ENCODE measurements at regions of chr13 and their contacts with region 1.

Region 1: GRCh38 chr13:99980201-99980823 is 1.3 kb upstream of the ZIC2 start:
- DNase-seq: peak; percentile 80
- ATAC-seq: peak; percentile 82
- H3K4me3 Mint-ChIP-seq: peak overlapping the region; percentile 30
- H3K27ac Mint-ChIP-seq: no peak overlapping the region
- H3K4me1 Mint-ChIP-seq: peaks cover 25% of the 10 kb centered on the region
- H3K27me3 Mint-ChIP-seq: peaks cover 60% of the 10 kb centered on the region

Region 2: DNA sequence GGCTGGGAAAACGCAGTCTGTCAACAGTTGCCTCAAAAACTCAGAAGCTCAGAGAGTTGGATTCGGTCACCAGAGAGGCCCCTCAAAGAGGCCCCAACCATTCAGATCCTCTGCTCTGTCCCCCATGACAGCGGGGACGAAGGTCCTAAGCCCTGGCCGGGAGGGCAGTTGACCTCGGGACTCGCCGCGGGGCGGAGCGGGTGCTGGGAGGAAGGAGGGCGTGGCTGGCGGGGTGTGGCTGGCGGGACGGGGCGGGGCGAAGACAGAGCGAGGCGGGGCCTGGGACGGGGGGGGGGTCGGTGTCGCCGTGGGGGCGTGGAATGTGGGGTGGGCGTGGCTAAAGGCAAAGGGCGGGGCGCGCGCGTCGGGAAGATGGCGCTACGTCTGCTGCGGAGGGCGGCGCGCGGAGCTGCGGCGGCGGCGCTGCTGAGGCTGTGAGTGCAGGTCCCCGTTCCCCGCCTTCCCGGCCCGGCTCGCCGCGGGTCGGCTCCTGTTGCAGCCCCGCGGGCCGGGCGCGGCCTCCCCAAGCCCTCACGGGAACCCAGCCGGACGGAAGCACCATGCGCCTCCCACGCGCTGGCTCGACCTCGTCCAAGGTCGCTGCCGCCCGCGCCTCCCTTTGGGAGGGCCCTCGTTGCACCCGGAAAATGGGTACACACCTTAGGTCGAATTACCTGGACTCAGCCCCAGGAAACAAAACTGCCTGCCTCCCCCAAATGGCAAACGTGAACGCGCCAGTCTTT is 373.8 kb before region 1 on chr13:
- CTCF ChIA-PET with region 1: no interaction called
- POLR2A ChIA-PET with region 1: no interaction called
- intact Hi-C with region 1: loop called in 1 of 2 experiments (anchors 1 kb)
- DNase-seq: peak; percentile 95
- ATAC-seq: peak; percentile 89
- H3K4me3 Mint-ChIP-seq: peak within 1 kb of the TSS; percentile 83
- H3K27ac Mint-ChIP-seq: peak within 1 kb of the TSS; percentile 81
- H3K4me1 Mint-ChIP-seq: peaks cover 42% of the 10 kb centered on the region
- H3K27me3 Mint-ChIP-seq: no peaks in the 10 kb centered on the region

Region 3: DNA sequence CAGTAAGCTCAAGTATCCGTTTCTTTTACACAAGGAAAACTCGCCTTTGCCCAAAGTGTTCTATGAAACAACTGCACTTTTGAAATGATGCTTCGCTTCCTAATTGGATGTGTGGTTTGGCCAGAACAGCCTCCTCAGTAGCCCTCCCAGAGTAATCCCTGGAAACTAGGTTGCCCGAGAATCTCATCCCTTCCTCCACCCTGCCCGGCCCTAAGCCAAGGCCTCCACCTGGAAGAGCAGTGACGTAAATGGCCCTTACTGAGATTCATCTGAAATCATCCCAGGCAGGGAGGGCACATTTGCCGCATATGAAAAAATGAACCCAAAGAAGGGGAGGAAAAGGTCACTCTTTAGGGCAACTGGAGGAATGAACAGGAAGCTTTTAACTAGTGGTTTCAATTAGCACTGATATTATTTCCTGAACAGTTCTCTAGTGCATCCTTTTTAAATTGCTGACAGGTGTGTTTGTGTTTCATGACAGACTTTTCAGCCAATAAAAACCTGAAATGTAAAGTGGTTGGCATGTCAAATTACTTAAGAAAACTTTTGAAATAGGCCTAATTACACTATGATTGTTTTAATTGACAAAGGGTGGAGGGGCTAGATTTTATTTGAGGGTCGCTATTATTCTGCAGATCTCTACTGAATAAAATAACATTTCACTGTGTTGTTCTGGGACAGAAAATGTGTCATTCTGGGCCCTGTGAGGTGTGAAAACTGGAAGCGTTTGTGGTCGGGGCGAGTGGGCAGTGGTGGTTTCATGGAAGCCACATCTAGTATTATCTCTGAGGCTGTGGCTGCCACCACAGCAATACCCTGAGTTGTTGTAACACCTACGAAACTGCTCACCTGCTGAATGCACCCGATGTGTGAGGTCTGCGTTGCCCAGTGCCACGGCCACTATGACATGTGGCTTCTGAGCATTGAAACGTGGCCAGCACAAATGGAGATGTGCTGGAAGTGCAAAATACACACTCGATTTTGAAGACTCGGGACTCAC is 120.8 kb before region 1 on chr13:
- CTCF ChIA-PET with region 1: no interaction called
- POLR2A ChIA-PET with region 1: no interaction called
- intact Hi-C with region 1: no loop called
- DNase-seq: peak; percentile 82
- ATAC-seq: peak; percentile 88
- H3K4me3 Mint-ChIP-seq: no peak overlapping the region
- H3K27ac Mint-ChIP-seq: no peak overlapping the region
- H3K4me1 Mint-ChIP-seq: peaks cover 9% of the 10 kb centered on the region
- H3K27me3 Mint-ChIP-seq: peaks cover 17% of the 10 kb centered on the region

Region 4: DNA sequence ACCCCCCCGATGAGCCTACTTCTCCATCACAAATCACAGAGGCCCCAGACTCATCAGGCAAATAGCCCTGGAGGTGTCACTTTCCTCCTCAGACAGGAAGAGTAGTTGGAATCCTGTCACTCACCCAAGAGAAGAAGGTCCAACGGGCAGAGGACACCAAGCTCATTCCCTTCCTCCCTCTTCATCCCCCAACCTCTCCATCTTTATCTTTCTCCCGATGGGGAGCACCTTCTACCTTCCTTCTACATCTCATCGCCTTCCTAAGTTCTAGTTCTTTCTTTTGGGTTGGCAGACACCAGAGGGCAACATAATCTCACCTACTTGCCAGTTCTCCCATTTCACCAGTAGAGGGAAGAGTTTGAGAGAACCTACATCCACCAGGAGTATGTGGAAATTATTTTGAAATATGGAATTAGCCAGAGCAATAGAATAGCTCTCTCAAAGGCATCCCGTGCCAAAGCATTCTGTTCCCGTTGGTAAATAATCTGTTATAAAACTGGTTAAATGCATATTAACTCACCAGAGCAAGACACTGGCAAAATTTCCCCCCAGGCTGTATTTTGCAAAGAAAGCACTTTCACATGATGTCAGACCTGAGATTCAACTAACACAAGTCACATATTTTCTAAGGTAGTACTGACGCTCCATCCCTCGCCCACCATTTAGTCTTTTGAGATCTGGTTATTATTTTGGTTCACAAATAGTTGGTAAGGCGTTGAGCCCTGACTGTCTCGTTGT is 63.8 kb before region 1 on chr13:
- CTCF ChIA-PET with region 1: no interaction called
- POLR2A ChIA-PET with region 1: no interaction called
- intact Hi-C with region 1: no loop called
- DNase-seq: peak; percentile 21
- ATAC-seq: peak; percentile 83
- H3K4me3 Mint-ChIP-seq: no peak overlapping the region
- H3K27ac Mint-ChIP-seq: no peak overlapping the region
- H3K4me1 Mint-ChIP-seq: peaks cover 8% of the 10 kb centered on the region
- H3K27me3 Mint-ChIP-seq: peaks cover 10% of the 10 kb centered on the region

Region 5: GRCh38 chr13:99955747-99956472 is 24.4 kb before region 1 on chr13:
- CTCF ChIA-PET with region 1: interaction called, 5 read pairs
- POLR2A ChIA-PET with region 1: no interaction called
- intact Hi-C with region 1: loop called (anchors 2 kb)
- DNase-seq: peak; percentile 19
- ATAC-seq: no peak
- H3K4me3 Mint-ChIP-seq: no peak overlapping the region
- H3K27ac Mint-ChIP-seq: no peak overlapping the region
- H3K4me1 Mint-ChIP-seq: peaks cover 28% of the 10 kb centered on the region
- H3K27me3 Mint-ChIP-seq: peaks cover 74% of the 10 kb centered on the region

Region 6: DNA sequence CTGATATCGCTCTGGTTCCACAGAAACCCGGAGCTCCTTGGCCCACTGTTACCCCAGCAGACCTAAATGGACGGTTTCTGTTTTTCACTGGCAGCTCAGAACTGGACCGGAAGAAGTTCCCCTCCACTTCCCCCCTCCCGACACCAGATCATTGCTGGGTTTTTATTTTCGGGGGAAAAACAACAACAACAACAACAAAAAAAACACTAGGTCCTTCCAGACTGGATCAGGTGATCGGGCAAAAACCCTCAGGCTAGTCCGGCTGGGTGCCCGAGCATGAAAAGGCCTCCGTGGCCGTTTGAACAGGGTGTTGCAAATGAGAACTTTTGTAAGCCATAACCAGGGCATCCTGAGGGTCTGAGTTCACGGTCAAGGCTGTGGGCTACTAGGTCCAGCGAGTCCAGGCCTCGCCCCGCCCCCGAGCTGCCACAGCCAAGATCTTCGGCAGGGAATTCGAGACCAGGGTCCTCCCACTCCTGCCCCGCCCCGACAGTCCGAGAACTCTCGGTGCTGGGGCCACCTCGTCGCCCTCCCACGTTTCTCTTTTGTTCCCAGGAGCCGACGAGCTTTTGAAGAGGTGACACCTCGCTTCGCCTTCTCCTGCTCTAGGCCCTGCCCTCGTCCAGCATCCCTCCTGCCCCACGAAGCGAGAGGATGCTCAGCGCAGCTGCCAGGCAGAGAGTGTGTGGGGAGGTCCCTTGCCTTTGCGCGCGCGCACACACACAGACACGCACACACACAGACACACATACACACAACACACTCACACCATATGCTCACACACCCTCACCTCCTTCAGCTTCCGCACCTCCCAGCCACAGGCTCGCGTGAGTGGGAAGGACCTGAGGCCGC is 10.0 kb after region 1 on chr13:
- CTCF ChIA-PET with region 1: interaction called, 6 read pairs
- POLR2A ChIA-PET with region 1: no interaction called
- intact Hi-C with region 1: loop called (anchors 2 kb)
- DNase-seq: peak; percentile 31
- ATAC-seq: peak; percentile 73
- H3K4me3 Mint-ChIP-seq: peak overlapping the region; percentile 6
- H3K27ac Mint-ChIP-seq: no peak overlapping the region
- H3K4me1 Mint-ChIP-seq: peaks cover 27% of the 10 kb centered on the region
- H3K27me3 Mint-ChIP-seq: peaks cover 86% of the 10 kb centered on the region

Region 7: DNA sequence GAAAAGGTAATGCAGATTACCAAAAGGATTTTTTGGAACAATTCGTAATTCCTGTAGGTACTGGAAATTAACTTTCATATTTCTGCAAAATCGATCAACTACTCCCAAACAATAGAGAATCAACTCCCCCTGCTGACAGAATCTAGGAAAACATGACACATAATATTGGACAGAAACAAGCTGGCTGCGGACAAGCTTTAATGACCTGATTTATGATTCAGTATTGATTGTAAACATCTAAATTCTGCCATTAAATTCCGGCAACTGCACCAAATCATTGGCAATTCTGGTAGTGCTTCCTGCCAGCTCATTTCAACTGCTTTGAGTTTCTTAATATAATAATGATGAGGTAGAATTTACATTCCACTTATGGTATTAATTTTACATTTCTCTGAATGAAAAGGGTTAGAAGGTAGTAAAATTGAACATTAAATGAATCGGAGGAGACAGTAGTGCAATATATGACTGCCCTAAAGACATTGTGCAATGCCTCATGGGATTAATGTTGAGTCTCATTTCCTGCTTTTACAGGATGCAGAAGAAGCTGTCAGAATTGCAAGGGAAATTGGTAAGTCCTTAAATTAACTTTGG is 255.1 kb after region 1 on chr13:
- CTCF ChIA-PET with region 1: no interaction called
- POLR2A ChIA-PET with region 1: no interaction called
- intact Hi-C with region 1: loop called in 1 of 2 experiments (anchors 10 kb)
- DNase-seq: no peak
- ATAC-seq: no peak
- H3K4me3 Mint-ChIP-seq: no peak overlapping the region
- H3K27ac Mint-ChIP-seq: no peak overlapping the region
- H3K4me1 Mint-ChIP-seq: peaks cover 3% of the 10 kb centered on the region
- H3K27me3 Mint-ChIP-seq: no peaks in the 10 kb centered on the region

Region 8: GRCh38 chr13:100674848-100675660 is 694.7 kb after region 1 on chr13:
- CTCF ChIA-PET with region 1: no interaction called
- POLR2A ChIA-PET with region 1: no interaction called
- intact Hi-C with region 1: loop called in 1 of 2 experiments (anchors 5 kb)
- DNase-seq: peak; percentile 99
- ATAC-seq: peak; percentile 96
- H3K4me3 Mint-ChIP-seq: peak overlapping the region; percentile 77
- H3K27ac Mint-ChIP-seq: peak overlapping the region; percentile 83
- H3K4me1 Mint-ChIP-seq: peaks cover 23% of the 10 kb centered on the region
- H3K27me3 Mint-ChIP-seq: peaks cover 7% of the 10 kb centered on the region